ENCODE measurements at regions of chr7 and their contacts with region 1.

Region 1: GRCh38 chr7:135281363-135281949 is 47.8 kb downstream of the STRA8 start:
- DNase-seq: peak; percentile 49 to 76
- H3K4me3 ChIP-seq: no peak overlapping the region
- H3K27ac ChIP-seq: no peak overlapping the region
- H3K4me1 ChIP-seq: no peaks in the 10 kb centered on the region
- H3K27me3 ChIP-seq: no peaks in the 10 kb centered on the region
- CTCF ChIP-seq: peak; percentile 99

Region 2: GRCh38 chr7:135232720-135233119 is 48.7 kb before region 1 on chr7:
- CTCF ChIA-PET with region 1: no interaction called
- POLR2A ChIA-PET with region 1: no interaction called
- intact Hi-C with region 1: no loop called
- DNase-seq: no peak
- H3K4me3 ChIP-seq: no peak overlapping the region
- H3K27ac ChIP-seq: no peak overlapping the region
- H3K4me1 ChIP-seq: no peaks in the 10 kb centered on the region
- H3K27me3 ChIP-seq: no peaks in the 10 kb centered on the region
- CTCF ChIP-seq: 0 out of 2 replicates have a peak, but pooled peaks have one; percentile 34

Region 3: GRCh38 chr7:135335628-135336139 is 54.2 kb after region 1 on chr7:
- CTCF ChIA-PET with region 1: interaction called, 18 read pairs
- POLR2A ChIA-PET with region 1: no interaction called
- intact Hi-C with region 1: loop called (anchors 1 kb)
- DNase-seq: peak; percentile 73 to 87
- H3K4me3 ChIP-seq: no peak overlapping the region
- H3K27ac ChIP-seq: no peak overlapping the region
- H3K4me1 ChIP-seq: no peaks in the 10 kb centered on the region
- H3K27me3 ChIP-seq: peaks cover 10% of the 10 kb centered on the region; the same call in 1 of the 2 replicates
- CTCF ChIP-seq: peak; percentile 88

Region 4: GRCh38 chr7:135558337-135558767 is 276.9 kb after region 1 on chr7:
- CTCF ChIA-PET with region 1: no interaction called
- POLR2A ChIA-PET with region 1: no interaction called
- intact Hi-C with region 1: loop called (anchors 1 kb)
- DNase-seq: peak; percentile 70
- H3K4me3 ChIP-seq: peak overlapping the region; percentile 85
- H3K27ac ChIP-seq: peak overlapping the region; percentile 91
- H3K4me1 ChIP-seq: peaks cover 6% of the 10 kb centered on the region
- H3K27me3 ChIP-seq: no peaks in the 10 kb centered on the region
- CTCF ChIP-seq: peak; percentile 70

Region 5: DNA sequence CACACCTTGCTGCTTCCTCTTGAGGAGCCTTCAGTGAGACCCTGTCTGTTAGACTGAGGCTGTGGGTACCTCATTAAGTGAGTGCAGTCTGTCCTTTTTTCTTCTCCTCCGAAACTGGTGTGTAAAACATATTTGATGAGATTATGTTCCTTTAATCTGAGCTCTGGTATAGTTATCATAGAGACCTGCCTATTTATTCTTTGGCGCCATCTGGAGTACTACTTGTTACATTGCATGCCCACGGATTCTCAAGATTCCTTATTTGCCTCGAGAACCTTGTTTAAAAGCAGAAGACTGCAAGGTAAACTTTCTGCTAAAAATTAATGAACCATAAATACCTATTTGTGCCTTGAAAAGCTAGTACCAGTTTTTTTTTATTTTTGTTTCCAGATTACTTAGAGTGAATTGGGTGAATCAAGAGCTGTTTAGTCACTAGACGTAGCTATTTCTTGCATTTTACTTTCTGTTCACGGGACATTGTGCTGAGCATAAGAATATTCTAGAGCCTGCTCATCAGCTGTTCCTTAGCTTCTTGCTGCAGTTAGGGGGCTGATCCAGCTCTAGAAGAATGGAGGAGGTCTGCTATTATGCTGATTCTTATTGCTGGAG is 363.9 kb after region 1 on chr7:
- CTCF ChIA-PET with region 1: interaction called, 12 read pairs
- POLR2A ChIA-PET with region 1: no interaction called
- intact Hi-C with region 1: loop called (anchors 1 kb)
- DNase-seq: no peak
- H3K4me3 ChIP-seq: no peak overlapping the region
- H3K27ac ChIP-seq: no peak overlapping the region
- H3K4me1 ChIP-seq: no peaks in the 10 kb centered on the region
- H3K27me3 ChIP-seq: no peaks in the 10 kb centered on the region
- CTCF ChIP-seq: peak; percentile 77

Measured in PC-9 (cell line).